ENCODE measurements at regions of chr17 and their contacts with region 1.

Region 1: GRCh38 chr17:59753522-59754467 is 46.3 kb downstream of the VMP1 start:
- DNase-seq: peak; percentile 35
- ATAC-seq: peak; percentile 76
- H3K4me3 Mint-ChIP-seq: peak overlapping the region; percentile 50
- H3K27ac Mint-ChIP-seq: peak overlapping the region; percentile 84
- H3K4me1 Mint-ChIP-seq: peaks cover 61% of the 10 kb centered on the region
- H3K27me3 Mint-ChIP-seq: no peaks in the 10 kb centered on the region
- CTCF ChIP-seq: peak; percentile 77

Region 2: GRCh38 chr17:59725691-59726090 is 28.1 kb before region 1 on chr17:
- CTCF ChIA-PET with region 1: no interaction called
- POLR2A ChIA-PET with region 1: no interaction called
- intact Hi-C with region 1: no loop called
- DNase-seq: no peak
- ATAC-seq: no peak
- H3K4me3 Mint-ChIP-seq: no peak overlapping the region
- H3K27ac Mint-ChIP-seq: no peak overlapping the region
- H3K4me1 Mint-ChIP-seq: peaks cover 17% of the 10 kb centered on the region
- H3K27me3 Mint-ChIP-seq: no peaks in the 10 kb centered on the region
- CTCF ChIP-seq: no peak

Region 3: DNA sequence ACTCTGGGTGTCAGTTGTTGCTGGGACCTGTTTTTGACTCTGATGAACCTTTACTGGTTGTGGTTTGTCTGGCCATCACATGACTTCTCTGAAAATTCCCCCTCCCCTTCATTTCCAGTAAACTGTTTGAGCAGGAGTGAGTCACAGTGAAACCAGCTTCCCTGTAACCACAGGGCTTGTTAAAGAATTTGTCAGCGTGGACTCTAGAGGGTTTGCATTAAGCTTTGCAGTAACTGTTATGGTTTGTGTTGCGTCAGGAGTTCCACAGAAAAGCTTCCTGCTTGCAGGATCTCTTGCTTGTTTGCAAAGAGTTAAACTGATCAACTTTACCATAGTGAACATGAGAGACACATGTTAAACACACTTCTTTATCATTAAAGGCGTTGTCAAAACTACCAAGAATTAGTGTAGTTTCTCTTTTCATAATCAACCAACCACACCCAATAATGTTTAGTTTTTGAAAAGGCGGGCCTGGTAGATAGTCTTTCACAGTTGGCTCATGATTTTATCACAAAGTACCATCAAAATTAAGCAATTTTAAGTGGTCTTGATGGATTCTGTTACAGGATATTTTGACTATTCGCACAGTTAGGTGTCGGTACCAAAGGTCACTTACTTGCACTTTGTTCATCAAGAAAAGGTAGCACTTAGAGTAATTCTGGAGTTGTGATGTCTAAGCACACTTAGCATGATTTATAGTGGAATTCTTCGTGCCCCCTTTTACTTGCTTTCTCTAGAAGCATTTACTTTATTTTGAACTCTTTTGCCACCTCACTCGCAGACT is 32.9 kb after region 1 on chr17:
- CTCF ChIA-PET with region 1: interaction called, 108 read pairs
- POLR2A ChIA-PET with region 1: interaction called, 115 read pairs
- intact Hi-C with region 1: loop called (anchors 2 kb)
- DNase-seq: peak; percentile 92
- ATAC-seq: peak; percentile 86
- H3K4me3 Mint-ChIP-seq: peak overlapping the region; percentile 72
- H3K27ac Mint-ChIP-seq: peak overlapping the region; percentile 99
- H3K4me1 Mint-ChIP-seq: peaks cover 58% of the 10 kb centered on the region
- H3K27me3 Mint-ChIP-seq: no peaks in the 10 kb centered on the region
- CTCF ChIP-seq: no peak

Region 4: GRCh38 chr17:59829217-59830006 is 75.6 kb after region 1 on chr17:
- CTCF ChIA-PET with region 1: interaction called, 50 read pairs
- POLR2A ChIA-PET with region 1: interaction called, 420 read pairs
- intact Hi-C with region 1: no loop called
- DNase-seq: peak; percentile 72
- ATAC-seq: peak; percentile 78
- H3K4me3 Mint-ChIP-seq: peak overlapping the region; percentile 89
- H3K27ac Mint-ChIP-seq: peak overlapping the region; percentile 97
- H3K4me1 Mint-ChIP-seq: peaks cover 73% of the 10 kb centered on the region
- H3K27me3 Mint-ChIP-seq: no peaks in the 10 kb centered on the region
- CTCF ChIP-seq: no peak

Region 5: GRCh38 chr17:59846394-59847165 is 92.8 kb after region 1 on chr17:
- CTCF ChIA-PET with region 1: interaction called, 16 read pairs
- POLR2A ChIA-PET with region 1: interaction called, 443 read pairs
- intact Hi-C with region 1: loop called (anchors 5 kb)
- DNase-seq: peak; percentile 40
- ATAC-seq: peak; percentile 45
- H3K4me3 Mint-ChIP-seq: peak overlapping the region; percentile 18
- H3K27ac Mint-ChIP-seq: peak overlapping the region; percentile 80
- H3K4me1 Mint-ChIP-seq: peaks cover 59% of the 10 kb centered on the region
- H3K27me3 Mint-ChIP-seq: no peaks in the 10 kb centered on the region
- CTCF ChIP-seq: no peak

Region 6: GRCh38 chr17:60036796-60037612 is 283.2 kb after region 1 on chr17:
- CTCF ChIA-PET with region 1: interaction called, 19 read pairs
- POLR2A ChIA-PET with region 1: interaction called, 3 read pairs
- intact Hi-C with region 1: loop called (anchors 10 kb)
- DNase-seq: peak; percentile 84
- ATAC-seq: peak; percentile 93
- H3K4me3 Mint-ChIP-seq: no peak overlapping the region
- H3K27ac Mint-ChIP-seq: no peak overlapping the region
- H3K4me1 Mint-ChIP-seq: peaks cover 5% of the 10 kb centered on the region
- H3K27me3 Mint-ChIP-seq: peaks cover 10% of the 10 kb centered on the region
- CTCF ChIP-seq: peak; percentile 95

Region 7: DNA sequence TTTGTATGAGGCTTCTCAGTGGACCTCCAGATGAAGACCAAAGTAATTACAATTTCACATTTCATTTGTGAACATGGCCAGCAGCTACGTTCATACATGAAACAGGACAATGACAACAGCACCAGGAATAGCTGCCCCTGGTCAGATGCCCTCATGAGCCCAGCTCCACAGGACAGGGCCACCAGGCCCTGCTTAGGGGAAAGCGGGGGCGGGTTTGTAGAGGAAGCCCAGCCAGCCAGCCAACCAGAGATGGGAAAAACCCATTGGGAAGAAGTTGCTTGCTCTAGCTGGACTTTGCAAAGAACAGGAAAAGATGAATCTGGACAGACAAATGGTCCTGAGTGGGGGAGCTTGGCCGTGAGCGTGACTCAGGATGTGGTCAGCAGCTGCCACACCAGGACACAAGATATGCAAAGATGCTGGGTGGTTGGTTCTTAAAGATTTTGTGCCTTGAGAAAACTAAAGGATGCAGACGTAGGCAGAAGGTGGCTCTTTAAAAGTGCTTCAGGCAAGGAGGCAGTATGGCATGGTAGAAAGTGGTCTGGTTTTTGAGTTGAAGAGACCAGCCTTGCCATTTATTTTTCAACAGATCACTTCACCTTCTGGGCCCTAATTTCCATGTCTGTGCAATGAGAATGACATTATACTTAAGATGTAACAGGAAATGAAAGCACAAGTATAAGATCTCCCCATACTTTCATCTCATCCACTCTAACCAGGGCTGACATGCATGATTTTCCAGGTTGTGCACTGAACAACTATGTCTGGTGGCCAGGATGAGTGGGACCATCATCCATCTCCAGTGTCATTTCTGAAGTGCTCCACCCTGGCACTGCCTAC is 352.6 kb after region 1 on chr17:
- CTCF ChIA-PET with region 1: no interaction called
- POLR2A ChIA-PET with region 1: no interaction called
- intact Hi-C with region 1: no loop called
- DNase-seq: no peak
- ATAC-seq: no peak
- H3K4me3 Mint-ChIP-seq: no peak overlapping the region
- H3K27ac Mint-ChIP-seq: no peak overlapping the region
- H3K4me1 Mint-ChIP-seq: peaks cover 17% of the 10 kb centered on the region
- H3K27me3 Mint-ChIP-seq: peaks cover 30% of the 10 kb centered on the region
- CTCF ChIP-seq: no peak